Activated B cell treated with CpG ODN at 0.5 μM for 24 hours (primary cell): ENCODE measurements at regions of chr2 and their contacts with region 1.

Region 1: DNA sequence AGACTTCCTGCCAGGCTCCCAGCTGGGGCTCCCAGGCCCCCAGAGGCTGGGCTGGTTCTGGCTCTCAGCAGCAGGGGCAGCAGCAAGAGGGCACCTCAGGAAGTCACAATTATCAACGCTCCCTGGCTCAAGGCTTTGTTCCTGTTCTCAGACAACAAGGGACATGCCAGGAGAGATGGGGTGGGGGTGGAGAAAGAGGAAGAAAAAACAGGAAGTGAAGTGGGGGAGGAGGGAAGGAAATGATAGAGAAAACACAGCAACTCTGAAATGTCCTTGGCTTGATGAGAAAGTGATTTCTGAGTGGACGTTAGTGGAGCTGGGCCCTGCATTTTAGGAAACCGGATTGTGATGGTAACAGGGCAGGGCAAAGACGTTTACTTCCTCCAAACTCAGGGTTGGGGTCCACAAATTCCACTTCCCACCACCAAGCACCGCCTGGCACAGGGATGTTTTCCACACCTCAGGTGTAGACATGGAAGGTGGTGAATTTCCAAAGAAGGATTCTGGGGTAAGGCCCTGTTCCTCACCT is 40.4 kb downstream of the CYRIA start:
- DNase-seq: no peak
- ATAC-seq: peak; percentile 55
- H3K4me3 Mint-ChIP-seq: peak overlapping the region; percentile 62
- H3K27ac Mint-ChIP-seq: peak overlapping the region; percentile 94
- H3K4me1 Mint-ChIP-seq: peaks cover 99% of the 10 kb centered on the region
- H3K27me3 Mint-ChIP-seq: no peaks in the 10 kb centered on the region
- CTCF ChIP-seq: no peak

Region 2: DNA sequence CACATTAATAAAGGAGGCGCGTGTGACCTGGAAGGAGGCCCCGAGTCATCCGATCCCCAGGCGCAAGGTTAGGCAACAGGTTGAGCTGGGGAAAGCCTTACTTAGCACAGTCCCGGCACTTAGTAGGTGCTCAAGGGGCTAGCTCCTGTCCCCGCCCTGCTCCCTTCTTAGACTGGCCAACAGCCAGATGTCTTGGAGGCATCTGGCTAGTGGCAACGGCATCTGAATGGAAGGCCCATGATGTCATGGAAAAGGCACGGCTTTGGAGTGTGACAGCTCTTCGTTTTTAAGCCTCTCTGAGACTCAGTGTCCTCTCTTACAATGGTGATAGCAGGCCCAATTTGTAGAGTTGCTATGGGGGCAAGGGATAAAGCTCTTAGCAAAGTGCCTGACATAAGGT is 217.9 kb before region 1 on chr2:
- CTCF ChIA-PET with region 1: no interaction called
- POLR2A ChIA-PET with region 1: no interaction called
- intact Hi-C with region 1: no loop called
- DNase-seq: no peak
- ATAC-seq: no peak
- H3K4me3 Mint-ChIP-seq: no peak overlapping the region
- H3K27ac Mint-ChIP-seq: no peak overlapping the region
- H3K4me1 Mint-ChIP-seq: no peaks in the 10 kb centered on the region
- H3K27me3 Mint-ChIP-seq: no peaks in the 10 kb centered on the region
- CTCF ChIP-seq: no peak

Region 3: DNA sequence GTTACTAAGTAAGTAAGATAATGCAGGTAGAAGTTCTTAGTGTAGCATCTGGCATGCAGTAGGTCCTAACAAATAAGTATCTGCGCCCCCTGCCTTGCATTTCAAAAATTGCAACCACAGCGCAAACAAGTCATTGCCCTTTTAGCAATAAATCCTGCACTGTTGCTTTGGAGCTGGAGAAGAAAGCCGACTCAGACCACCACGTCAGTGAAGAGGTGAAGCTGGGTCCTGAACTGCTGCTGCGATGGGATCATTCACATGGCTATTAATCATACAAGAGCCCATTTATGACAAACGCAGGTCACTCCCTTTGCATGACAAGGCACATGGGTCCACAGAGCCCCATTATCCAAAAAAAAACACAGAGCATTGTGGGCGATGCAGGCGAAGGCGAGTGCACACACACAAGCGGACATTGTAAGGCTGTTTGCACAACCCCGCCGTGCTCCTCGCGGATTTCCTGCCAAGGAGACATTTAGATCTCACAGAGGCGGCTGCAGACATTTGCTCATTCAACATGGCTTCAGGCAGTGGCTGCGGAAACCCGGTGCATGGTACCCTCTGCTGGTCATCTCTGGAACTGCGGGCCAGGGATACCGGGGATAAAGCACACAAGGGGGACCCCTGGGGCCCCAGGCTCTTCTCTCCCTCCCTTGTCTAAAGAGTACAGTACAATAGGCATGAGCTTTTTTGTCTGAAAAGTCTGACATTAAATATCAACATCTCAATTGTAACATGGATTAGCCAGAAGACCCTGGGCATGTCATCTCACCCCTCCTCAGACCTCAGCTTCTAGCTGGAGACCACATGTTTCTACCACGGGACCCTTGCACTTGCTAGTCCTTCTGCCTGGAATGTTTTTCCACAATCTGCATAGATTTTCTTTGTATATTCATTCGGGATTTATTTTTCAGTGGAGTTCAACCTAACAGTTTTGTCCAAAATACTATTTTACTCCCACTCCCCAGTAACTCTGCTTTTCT is 16.3 kb before region 1 on chr2:
- CTCF ChIA-PET with region 1: interaction called, 42 read pairs
- POLR2A ChIA-PET with region 1: interaction called, 4 read pairs
- intact Hi-C with region 1: loop called (anchors 1 kb)
- DNase-seq: peak; percentile 79
- ATAC-seq: peak; percentile 92
- H3K4me3 Mint-ChIP-seq: peak overlapping the region; percentile 79
- H3K27ac Mint-ChIP-seq: peak overlapping the region; percentile 53
- H3K4me1 Mint-ChIP-seq: peaks cover 31% of the 10 kb centered on the region
- H3K27me3 Mint-ChIP-seq: no peaks in the 10 kb centered on the region
- CTCF ChIP-seq: peak; percentile 83

Region 4: DNA sequence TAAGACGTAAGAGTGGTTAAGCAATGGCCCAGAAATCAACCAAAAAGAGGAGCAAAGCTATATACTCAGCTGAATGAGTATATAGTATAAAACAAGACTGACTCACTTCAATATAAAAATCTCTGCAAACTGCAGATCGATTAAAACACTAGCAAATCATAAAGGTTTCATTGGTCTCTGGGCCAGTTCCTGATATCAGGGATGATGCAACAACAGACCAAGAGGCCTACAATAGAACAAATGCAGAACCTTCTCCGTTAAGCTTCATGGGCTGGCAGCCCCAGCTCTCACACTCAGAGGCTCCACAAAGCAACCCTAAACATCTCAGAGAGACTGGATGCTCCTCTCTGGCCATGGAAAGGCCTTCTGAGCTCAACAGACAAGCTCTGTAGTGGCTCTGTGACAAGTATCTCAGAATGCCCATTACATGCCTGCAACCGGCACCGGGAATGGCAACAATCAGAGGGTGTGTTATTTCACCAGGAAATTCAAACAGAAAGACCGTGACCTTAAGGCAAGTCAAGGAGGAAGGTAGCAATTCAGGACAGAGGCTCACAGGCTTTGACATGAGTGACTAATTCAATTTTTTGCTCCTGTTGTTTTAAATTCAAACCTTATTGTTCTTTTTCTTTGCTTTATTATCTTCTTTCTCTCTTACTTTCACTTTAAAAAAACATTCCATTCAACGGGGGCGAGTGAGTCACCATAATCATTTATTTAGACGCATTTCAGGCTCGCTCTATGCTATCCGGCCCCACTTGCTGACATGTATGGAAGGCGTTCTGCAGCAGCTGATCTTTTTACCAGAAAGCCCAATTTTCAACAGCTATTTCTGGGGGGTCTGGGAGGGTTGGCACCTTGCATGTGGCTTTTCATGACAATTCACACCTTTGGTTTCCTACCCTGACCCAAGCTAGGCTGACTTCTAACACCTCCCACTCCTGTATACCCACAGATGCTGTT is 25.3 kb after region 1 on chr2:
- CTCF ChIA-PET with region 1: interaction called, 12 read pairs
- POLR2A ChIA-PET with region 1: interaction called, 84 read pairs
- intact Hi-C with region 1: loop called (anchors 1 kb)
- DNase-seq: no peak
- ATAC-seq: peak; percentile 56
- H3K4me3 Mint-ChIP-seq: peak overlapping the region; percentile 77
- H3K27ac Mint-ChIP-seq: peak overlapping the region; percentile 95
- H3K4me1 Mint-ChIP-seq: peaks cover 98% of the 10 kb centered on the region
- H3K27me3 Mint-ChIP-seq: no peaks in the 10 kb centered on the region
- CTCF ChIP-seq: no peak

Region 5: DNA sequence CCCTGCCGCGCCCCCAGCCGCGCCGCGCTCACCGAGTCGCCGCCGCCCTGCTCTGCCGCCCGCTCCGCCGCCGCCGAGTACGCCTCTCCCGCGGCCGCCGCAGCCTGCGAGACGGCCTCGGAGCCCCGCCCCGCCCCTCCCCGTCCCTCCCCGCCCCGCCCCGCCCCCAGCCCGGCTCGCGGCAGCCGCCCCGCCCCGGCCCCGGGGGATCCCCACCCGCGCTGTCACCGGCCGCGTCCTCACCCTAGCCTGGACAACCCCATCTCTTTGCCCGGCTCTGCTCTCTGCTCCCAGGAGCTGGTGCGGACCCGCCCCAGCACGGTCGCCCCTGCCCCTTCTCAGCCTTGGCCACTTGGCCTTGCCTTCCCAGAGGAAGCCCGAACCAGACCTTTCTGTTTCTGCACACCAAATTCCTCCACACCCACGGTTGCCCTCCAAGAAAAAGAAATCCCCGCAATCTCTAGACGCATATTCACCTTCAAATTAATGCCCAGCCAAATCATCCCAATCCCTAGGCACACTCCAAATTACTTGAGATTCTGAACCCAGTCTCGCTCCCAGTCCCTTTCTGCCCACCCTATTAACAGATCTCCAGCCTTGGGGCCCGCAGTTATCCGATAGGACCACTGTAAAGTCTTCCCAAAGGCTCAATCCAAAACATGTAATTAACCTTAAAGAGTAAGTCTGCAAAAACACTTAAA is 40.6 kb after region 1 on chr2 and contains the start of gene CYRIA:
- CTCF ChIA-PET with region 1: interaction called, 5 read pairs
- POLR2A ChIA-PET with region 1: interaction called, 84 read pairs
- intact Hi-C with region 1: loop called (anchors 1 kb)
- DNase-seq: peak; percentile 70
- ATAC-seq: peak; percentile 69
- H3K4me3 Mint-ChIP-seq: peak within 1 kb of the TSS; percentile 97
- H3K27ac Mint-ChIP-seq: peak within 1 kb of the TSS; percentile 96
- H3K4me1 Mint-ChIP-seq: peaks cover 58% of the 10 kb centered on the region
- H3K27me3 Mint-ChIP-seq: no peaks in the 10 kb centered on the region
- CTCF ChIP-seq: no peak
- total RNA-seq, gene CYRIA: 72.7 and 76.1 TPM in 2 replicates

Region 6: DNA sequence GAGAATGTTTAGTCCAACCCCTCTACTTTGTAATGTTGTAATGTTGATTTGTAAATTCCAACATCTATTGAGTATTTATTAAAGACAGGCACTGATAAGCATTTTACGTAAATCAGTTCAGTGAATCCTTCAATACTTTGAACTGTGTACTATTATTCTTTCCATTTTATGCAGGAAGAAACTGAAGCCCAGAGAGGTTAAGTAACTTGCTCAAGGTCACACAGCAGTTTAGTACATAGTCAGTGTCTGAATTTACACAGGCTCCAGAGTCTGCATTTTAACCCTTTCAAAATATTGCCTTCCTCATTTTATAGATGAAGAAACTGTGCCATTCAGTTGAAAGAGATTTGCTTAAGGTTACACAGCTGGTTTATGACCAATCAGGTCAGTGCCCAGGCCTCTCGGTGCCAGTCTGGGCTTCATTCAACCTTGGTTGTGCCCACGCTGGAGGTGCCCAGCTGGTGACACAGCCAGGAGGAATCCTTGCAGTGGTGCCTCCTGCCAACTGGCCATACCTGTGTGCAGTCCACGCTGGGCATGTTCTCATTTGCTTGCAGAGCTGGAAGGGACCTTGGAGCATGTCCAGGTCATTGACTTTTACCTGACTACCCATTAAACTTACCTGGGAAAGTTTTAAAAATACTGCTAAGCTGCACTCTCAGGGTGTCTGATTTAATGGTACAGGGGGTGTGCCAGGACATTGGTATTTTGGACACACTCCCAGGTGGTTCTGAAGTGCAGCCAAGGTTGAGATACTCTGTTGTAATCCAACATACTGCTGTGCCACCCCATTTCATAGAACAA is 114.7 kb after region 1 on chr2:
- CTCF ChIA-PET with region 1: no interaction called
- POLR2A ChIA-PET with region 1: no interaction called
- intact Hi-C with region 1: loop called (anchors 5 kb)
- DNase-seq: no peak
- ATAC-seq: no peak
- H3K4me3 Mint-ChIP-seq: no peak overlapping the region
- H3K27ac Mint-ChIP-seq: no peak overlapping the region
- H3K4me1 Mint-ChIP-seq: peaks cover 18% of the 10 kb centered on the region
- H3K27me3 Mint-ChIP-seq: no peaks in the 10 kb centered on the region
- CTCF ChIP-seq: no peak

Region 7: DNA sequence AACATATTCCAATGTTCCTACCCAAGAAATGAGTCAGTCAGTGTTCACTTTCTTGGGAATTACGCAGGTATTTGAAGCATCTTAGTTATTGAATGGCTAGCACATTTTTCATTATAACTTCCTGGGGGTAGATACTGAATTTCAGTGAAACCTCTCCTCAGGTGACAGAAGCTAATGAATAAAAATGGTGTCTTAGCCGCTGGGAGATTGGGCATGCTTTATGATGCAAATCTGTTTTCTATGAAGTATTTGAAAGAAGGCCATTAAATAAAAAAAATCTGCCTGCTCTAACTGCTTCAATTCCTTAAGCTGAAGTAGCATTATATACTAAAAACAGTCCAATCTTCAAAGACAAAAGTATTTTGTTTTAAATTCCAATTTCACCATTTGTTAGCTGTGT is 173.2 kb after region 1 on chr2:
- CTCF ChIA-PET with region 1: no interaction called
- POLR2A ChIA-PET with region 1: no interaction called
- intact Hi-C with region 1: no loop called
- DNase-seq: no peak
- ATAC-seq: no peak
- H3K4me3 Mint-ChIP-seq: no peak overlapping the region
- H3K27ac Mint-ChIP-seq: no peak overlapping the region
- H3K4me1 Mint-ChIP-seq: no peaks in the 10 kb centered on the region
- H3K27me3 Mint-ChIP-seq: peaks cover 4% of the 10 kb centered on the region
- CTCF ChIP-seq: no peak